ENCODE measurements at regions of chr15 and their contacts with region 1.

Region 1: GRCh38 chr15:92709110-92709790 is 53.7 kb upstream of the FAM174B start:
- DNase-seq: peak; percentile 5
- H3K4me3 ChIP-seq: no peak overlapping the region
- H3K27ac ChIP-seq: no peak overlapping the region
- H3K4me1 ChIP-seq: no peaks in the 10 kb centered on the region
- H3K27me3 ChIP-seq: no peaks in the 10 kb centered on the region

Region 2: DNA sequence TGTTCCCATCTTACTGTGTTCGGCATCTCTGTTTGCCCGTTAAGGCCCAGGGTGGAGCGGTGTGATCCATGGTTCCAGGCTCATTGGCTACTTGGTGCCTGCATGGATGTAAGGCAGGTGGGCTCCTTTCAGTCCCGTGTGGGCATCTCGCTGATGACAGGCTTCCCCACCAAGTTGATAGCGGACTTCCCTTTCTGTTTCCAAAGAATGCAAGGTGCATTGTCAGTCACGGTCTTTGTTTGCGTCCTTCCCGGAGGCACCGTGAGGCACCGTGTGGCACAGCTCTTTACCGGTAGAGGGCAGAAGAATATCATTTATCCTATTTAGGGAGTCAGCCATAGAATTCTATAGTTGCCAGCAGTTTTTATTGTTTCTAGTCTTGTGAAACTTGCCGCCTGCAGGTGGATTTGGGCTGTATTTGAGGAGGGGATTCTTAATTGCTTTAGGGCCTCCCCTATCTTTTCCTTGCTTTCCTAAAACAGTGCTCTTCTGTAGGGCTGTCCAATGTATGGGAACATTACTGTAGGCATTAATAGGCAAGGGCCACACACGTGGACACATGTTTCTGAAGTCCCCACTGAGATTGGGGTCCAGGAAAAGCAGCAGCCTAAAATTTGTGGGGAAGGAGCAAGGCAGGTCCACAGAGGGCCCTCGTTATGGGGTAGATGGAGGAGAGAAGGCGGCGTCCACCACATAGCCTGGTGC is 611.6 kb before region 1 on chr15:
- in situ Hi-C with region 1: loop called (anchors 10 kb)
- DNase-seq: peak; percentile 77
- H3K4me3 ChIP-seq: no peak overlapping the region
- H3K27ac ChIP-seq: no peak overlapping the region
- H3K4me1 ChIP-seq: no peaks in the 10 kb centered on the region
- H3K27me3 ChIP-seq: no peaks in the 10 kb centered on the region

Region 3: DNA sequence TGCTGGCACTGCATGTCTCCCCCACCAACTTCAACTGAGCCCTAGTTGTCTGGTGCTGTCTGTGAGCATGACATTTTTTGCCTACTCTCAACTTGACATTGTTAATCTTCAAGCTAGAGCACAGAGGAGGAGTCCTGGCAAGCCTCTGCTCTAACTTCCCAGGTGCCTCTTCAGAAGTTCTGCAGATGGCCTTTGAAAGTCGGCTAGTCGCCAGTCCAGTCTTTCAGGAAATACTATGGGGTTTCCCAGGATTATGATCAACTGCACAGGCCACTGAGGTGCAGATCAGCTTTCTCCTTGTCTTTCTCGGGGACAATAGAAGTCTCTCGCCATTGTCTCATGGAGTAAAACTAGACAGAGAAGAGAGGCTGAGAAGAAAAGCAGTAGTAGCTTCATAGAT is 228.9 kb before region 1 on chr15:
- in situ Hi-C with region 1: no loop called
- DNase-seq: no peak
- H3K4me3 ChIP-seq: no peak overlapping the region
- H3K27ac ChIP-seq: no peak overlapping the region
- H3K4me1 ChIP-seq: no peaks in the 10 kb centered on the region
- H3K27me3 ChIP-seq: no peaks in the 10 kb centered on the region

Region 4: DNA sequence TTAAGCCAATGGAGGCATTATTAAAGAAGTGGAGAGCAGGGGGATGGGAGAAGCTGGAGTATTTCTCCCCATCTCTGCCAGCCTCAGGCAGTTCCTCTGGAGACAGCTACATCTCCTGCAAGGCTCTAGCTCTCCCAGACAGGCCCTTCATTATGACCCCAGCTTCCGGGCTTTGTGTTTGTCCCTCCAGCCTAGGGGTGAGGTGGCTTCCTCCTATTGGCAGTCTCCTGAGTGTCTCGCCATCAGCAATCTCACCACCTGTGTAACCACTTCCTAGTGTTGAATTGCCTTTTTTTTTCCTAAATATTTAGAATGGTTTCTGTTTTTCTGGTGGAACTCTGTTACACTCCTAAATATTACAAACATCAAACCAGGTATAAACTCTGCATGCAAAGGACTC is 176.0 kb before region 1 on chr15:
- in situ Hi-C with region 1: loop called (anchors 10 kb)
- DNase-seq: no peak
- H3K4me3 ChIP-seq: no peak overlapping the region
- H3K27ac ChIP-seq: no peak overlapping the region
- H3K4me1 ChIP-seq: no peaks in the 10 kb centered on the region
- H3K27me3 ChIP-seq: no peaks in the 10 kb centered on the region; the same call in none of the 2 replicates